Activated T-helper 1 cell treated with anti-CD3 and anti-CD28 coated beads, Interleukin-12 subunit alpha, Interleukin-12 subunit beta, Interleukin-2, Interleukin-4 antibody, amounts not matched to agents 30 ng/mL and 10 ng/mL and 1 ng/mL, durations not matched to agents 14 hours and 24 hours and 36 hours (primary cell): ENCODE measurements at regions of chr3 and their contacts with region 1.

Region 1: DNA sequence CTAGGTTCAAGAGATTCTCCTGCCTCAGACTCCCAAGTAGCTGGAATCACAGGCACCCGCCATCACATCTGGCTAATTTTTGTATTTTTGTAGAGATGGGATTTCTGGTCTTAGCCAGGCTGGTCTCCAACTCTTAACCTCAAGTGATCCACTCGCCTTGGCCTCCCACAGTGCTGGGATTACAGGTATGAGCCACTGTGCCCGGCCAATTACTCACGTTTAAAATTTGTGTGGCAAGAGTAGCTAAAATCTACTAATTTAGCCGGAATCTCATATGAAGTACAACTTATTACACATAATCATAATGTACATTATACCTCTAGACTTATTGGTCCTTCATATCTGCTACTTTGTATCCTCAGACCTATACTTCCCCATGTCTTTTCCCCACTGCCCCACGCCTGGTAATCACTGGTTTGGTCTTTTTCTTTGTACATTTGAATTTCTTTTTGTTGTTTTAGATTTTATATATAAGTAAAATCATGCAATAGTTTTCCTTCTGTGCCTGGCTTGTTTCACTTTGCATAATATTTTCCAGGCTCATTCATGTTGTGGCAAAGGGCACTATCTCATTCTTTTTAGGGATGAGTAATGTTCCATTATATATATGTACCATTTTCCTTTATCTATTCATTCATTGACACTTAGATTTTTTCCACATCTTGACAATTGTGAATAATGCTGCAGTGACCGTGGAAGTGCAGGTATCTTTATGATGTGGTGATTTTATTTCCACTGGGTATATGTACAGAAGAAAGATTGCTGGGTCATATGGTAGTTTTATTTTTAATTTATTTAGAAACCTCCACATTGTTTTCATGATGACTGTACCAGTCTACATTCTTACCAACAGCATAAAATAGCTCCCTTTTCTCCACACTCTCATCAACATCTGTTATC is 605.0 kb upstream of the CBLB start:
- DNase-seq: no peak
- H3K4me3 Mint-ChIP-seq: no peak overlapping the region
- H3K27ac Mint-ChIP-seq: peak overlapping the region; percentile 94
- H3K4me1 Mint-ChIP-seq: peaks cover 18% of the 10 kb centered on the region
- H3K27me3 Mint-ChIP-seq: no peaks in the 10 kb centered on the region

Region 2: DNA sequence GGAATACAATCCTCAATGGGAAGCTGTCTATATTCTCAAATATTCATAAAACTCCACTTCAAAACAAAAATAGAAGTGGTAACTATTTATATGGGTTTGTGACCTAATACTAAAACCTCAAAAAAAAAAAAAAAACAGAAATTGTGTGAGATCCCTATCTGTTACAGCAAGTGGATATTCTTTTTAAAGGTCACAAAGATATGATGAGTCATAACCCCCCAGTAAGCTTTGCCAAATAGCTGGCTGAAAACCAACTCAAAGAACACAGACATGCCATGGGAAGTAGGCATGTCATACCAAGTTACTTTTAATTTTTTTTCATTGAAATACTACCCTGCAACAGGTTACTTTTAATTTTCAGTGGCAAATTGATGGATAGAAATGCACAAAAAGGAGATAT is 667.5 kb before region 1 on chr3:
- intact Hi-C with region 1: loop called (anchors 1 kb)
- DNase-seq: no peak
- H3K4me3 Mint-ChIP-seq: peak overlapping the region; percentile 40
- H3K27ac Mint-ChIP-seq: peak overlapping the region; percentile 84
- H3K4me1 Mint-ChIP-seq: peaks cover 67% of the 10 kb centered on the region
- H3K27me3 Mint-ChIP-seq: no peaks in the 10 kb centered on the region

Region 3: GRCh38 chr3:106119614-106120082 is 354.2 kb before region 1 on chr3:
- intact Hi-C with region 1: loop called (anchors 1 kb)
- DNase-seq: no peak
- H3K4me3 Mint-ChIP-seq: peak overlapping the region; percentile 20
- H3K27ac Mint-ChIP-seq: peak overlapping the region; percentile 90
- H3K4me1 Mint-ChIP-seq: peaks cover 37% of the 10 kb centered on the region
- H3K27me3 Mint-ChIP-seq: no peaks in the 10 kb centered on the region

Region 4: GRCh38 chr3:106423321-106424225 is 50.3 kb before region 1 on chr3:
- intact Hi-C with region 1: loop called (anchors 1 kb)
- DNase-seq: no peak
- H3K4me3 Mint-ChIP-seq: peak overlapping the region; percentile 45
- H3K27ac Mint-ChIP-seq: peak overlapping the region; percentile 90
- H3K4me1 Mint-ChIP-seq: peaks cover 50% of the 10 kb centered on the region
- H3K27me3 Mint-ChIP-seq: no peaks in the 10 kb centered on the region

Region 5: GRCh38 chr3:106534206-106534605 is 60.4 kb after region 1 on chr3:
- intact Hi-C with region 1: loop called (anchors 1 kb)
- DNase-seq: peak; percentile 40
- H3K4me3 Mint-ChIP-seq: no peak overlapping the region
- H3K27ac Mint-ChIP-seq: peak overlapping the region; percentile 72
- H3K4me1 Mint-ChIP-seq: peaks cover 28% of the 10 kb centered on the region
- H3K27me3 Mint-ChIP-seq: no peaks in the 10 kb centered on the region